AG04450 (cell line): ENCODE measurements at regions of chr12 and their contacts with region 1.

Region 1: DNA sequence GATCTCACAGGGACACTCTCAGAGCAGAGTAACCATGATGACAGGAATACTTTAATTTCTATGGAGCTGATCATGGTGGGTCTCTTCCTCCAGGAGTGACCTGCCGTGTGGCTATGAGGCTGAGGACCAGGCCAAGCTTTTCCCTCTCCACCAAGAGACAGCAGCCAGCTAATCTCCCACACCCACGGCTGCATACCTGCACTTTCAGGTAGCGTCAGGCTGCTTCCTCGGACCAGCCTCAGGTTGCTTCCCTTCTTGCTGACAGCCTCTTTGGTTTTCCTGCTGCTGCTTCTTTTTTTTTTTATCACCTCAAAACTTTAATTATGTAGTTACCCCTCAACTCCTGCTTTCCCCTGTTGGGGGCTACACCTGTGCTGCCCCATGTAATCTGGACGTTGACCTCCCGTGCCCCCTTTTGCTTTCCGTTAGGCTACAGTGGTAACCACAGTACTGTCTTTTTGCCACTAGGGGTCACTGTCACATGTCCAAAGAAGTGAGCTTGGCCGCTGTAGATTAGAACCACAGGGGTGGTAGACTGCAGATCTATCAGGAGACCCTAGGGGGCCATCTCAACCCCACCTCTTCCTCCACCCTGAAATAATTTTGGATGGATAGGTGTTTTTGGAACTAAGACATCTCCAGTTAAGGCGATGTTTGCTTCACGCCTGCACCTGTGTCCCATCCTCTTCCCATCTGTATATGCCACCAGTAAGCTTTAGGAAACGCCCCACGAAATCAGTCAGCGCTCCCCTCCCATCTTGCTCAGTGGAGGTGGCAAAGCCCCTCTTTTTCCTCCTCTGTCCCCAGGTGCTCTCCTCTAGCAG is 7.8 kb upstream of the PIP4K2C start:
- DNase-seq: peak; percentile 67
- H3K4me3 ChIP-seq: no peak overlapping the region
- H3K27ac ChIP-seq: no peak overlapping the region
- H3K27me3 ChIP-seq: peaks cover 22% of the 10 kb centered on the region
- CTCF ChIP-seq: peak; percentile 89

Region 2: GRCh38 chr12:57563358-57563757 is 19.9 kb before region 1 on chr12:
- CTCF ChIA-PET with region 1: interaction called, 11 read pairs
- POLR2A ChIA-PET with region 1: no interaction called
- DNase-seq: no peak
- H3K4me3 ChIP-seq: no peak overlapping the region
- H3K27ac ChIP-seq: no peak overlapping the region
- H3K27me3 ChIP-seq: peaks cover 15% of the 10 kb centered on the region
- CTCF ChIP-seq: no peak

Region 3: GRCh38 chr12:57614178-57614947 is 31.1 kb after region 1 on chr12:
- CTCF ChIA-PET with region 1: interaction called, 112 read pairs
- POLR2A ChIA-PET with region 1: interaction called, 4 read pairs
- DNase-seq: no peak
- H3K4me3 ChIP-seq: no peak overlapping the region
- H3K27ac ChIP-seq: no peak overlapping the region
- H3K27me3 ChIP-seq: no peaks in the 10 kb centered on the region
- CTCF ChIP-seq: no peak

Region 4: DNA sequence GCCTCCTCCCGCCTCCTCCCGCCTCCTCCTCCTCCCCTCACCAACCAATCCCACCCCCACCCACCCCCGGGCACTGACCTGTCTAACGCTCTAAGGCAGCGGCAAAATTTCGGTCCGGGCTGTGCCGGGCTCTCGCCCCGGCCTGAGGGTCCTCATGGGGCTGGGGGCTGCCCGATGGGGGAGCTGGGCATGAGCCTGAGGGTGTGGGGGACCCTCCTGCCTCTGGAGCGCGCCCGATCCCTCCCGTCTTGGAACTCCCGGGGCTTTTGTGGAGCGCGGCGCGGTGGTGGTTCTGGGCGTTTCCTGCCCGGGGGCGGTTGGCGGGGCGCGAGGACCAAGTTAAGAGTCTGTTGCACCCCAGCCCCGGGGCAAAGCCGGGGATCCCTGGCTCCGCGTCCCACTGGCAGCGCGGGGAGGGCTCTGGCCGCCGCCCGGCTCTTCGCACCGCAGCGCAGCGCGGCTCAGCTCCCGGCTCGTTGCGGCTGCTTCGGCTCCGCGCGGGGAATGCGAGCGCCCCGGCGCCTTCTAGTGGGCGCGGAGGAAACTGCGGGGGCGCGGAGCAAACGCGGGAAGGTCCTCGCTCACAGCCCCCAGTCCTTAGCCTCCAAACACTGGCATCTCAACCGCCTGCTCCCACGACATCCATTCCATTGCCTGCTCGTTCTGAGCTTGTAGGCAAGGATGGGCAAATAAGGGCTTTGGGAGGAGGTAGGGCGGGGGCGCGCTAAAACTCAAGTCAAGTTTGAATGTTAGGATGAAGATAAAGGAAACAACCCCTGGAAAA is 49.7 kb after region 1 on chr12 and contains the start of gene B4GALNT1:
- CTCF ChIA-PET with region 1: interaction called, 59 read pairs
- POLR2A ChIA-PET with region 1: no interaction called
- DNase-seq: no peak
- H3K4me3 ChIP-seq: peak within 1 kb of the TSS; percentile 59
- H3K27ac ChIP-seq: no peak within 1 kb of the TSS
- H3K27me3 ChIP-seq: peaks cover 32% of the 10 kb centered on the region
- CTCF ChIP-seq: peak; percentile 91
- polyA plus RNA-seq, gene B4GALNT1: 1.8 and 2.5 TPM in 2 replicates

Region 5: GRCh38 chr12:57735952-57736740 is 152.9 kb after region 1 on chr12:
- CTCF ChIA-PET with region 1: interaction called, 12 read pairs
- POLR2A ChIA-PET with region 1: no interaction called
- DNase-seq: no peak
- H3K4me3 ChIP-seq: peak overlapping the region; percentile 35
- H3K27ac ChIP-seq: no peak overlapping the region
- H3K27me3 ChIP-seq: peaks cover 88% of the 10 kb centered on the region
- CTCF ChIP-seq: peak; percentile 51